GM10248 (cell line): ENCODE measurements at regions of chr12 and their contacts with region 1.

Region 1: GRCh38 chr12:89783357-89784060 is 74.9 kb upstream of the ATP2B1 start:
- DNase-seq: no peak
- CTCF ChIP-seq: no peak

Region 2: GRCh38 chr12:89756585-89757321 is 26.8 kb before region 1 on chr12:
- CTCF ChIA-PET with region 1: no interaction called
- POLR2A ChIA-PET with region 1: no interaction called
- DNase-seq: peak; percentile 79
- CTCF ChIP-seq: no peak

Region 3: GRCh38 chr12:89796798-89797382 is 13.4 kb after region 1 on chr12:
- CTCF ChIA-PET with region 1: interaction called, 13 read pairs
- POLR2A ChIA-PET with region 1: no interaction called
- DNase-seq: no peak
- CTCF ChIP-seq: no peak

Region 4: GRCh38 chr12:89821901-89822300 is 38.4 kb after region 1 on chr12:
- CTCF ChIA-PET with region 1: no interaction called
- POLR2A ChIA-PET with region 1: no interaction called
- DNase-seq: peak; percentile 23
- CTCF ChIP-seq: no peak